Lower leg skin (tissue), 4 donors: ENCODE measurements at regions of chr6 and their contacts with region 1.

Region 1: DNA sequence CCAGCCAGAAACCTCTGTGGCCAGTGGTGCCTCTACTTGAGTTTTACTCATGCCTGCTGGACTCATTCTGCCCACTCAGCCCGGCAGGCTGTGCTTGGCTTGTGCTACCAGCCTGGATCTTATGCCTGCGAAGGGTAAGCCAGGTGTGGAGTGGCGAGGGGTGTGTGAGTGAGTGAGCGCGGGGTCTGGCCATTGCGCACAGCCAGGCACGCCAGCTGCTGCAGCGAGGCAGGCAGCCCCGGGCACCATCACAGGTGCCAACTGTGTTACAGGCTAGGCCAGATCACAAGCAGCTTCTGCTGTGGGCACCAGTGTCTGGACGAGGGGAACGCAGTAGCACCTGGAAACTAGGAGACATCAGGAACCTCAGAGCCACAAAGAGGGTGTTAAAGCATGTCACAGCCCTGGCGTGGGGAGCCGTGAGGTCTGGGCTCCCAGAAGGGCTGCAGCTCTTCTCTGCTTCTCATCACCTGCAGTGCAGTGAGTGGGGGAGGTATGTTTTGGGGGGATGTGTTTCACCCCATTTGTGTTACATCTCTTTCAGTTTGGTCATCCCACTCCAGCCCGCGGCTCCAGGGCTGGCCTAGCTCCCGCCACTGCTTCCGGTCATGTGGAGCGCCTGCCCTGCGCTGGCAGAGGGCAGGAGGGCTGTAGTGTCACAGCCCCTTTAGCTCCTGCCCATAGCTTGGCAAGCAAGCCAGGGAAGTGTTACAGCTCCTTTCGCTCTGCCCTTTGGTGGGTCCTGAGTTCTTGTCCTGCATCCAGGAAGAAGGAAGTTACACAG is 379.7 kb upstream of the IMPG1 start:
- DNase-seq: no peak
- H3K4me3 ChIP-seq: no peak overlapping the region
- CTCF ChIP-seq: no peak
- POLR2A ChIP-seq: no peak

Region 2: GRCh38 chr6:76435174-76435573 is 16.9 kb before region 1 on chr6:
- intact Hi-C with region 1: loop called (anchors 1 kb)
- DNase-seq: no peak
- H3K4me3 ChIP-seq: no peak overlapping the region
- CTCF ChIP-seq: no peak
- POLR2A ChIP-seq: no peak

Region 3: GRCh38 chr6:76719449-76719848 is 267.3 kb after region 1 on chr6:
- intact Hi-C with region 1: no loop called
- DNase-seq: no peak
- H3K4me3 ChIP-seq: no peak overlapping the region
- CTCF ChIP-seq: no peak
- POLR2A ChIP-seq: no peak